PC-9 (cell line): ENCODE measurements at regions of chr5 and their contacts with region 1.

Region 1: GRCh38 chr5:119287547-119288073 is 68.2 kb upstream of the TNFAIP8 start:
- DNase-seq: peak; percentile 32 to 91
- H3K4me3 ChIP-seq: peak overlapping the region; percentile 43; the same call in 1 of the 2 replicates
- H3K27ac ChIP-seq: peak overlapping the region; percentile 75
- H3K4me1 ChIP-seq: peaks cover 50% of the 10 kb centered on the region
- H3K27me3 ChIP-seq: no peaks in the 10 kb centered on the region
- CTCF ChIP-seq: no peak

Region 2: GRCh38 chr5:119274767-119275130 is 12.9 kb before region 1 on chr5:
- CTCF ChIA-PET with region 1: no interaction called
- POLR2A ChIA-PET with region 1: interaction called, 6 read pairs
- intact Hi-C with region 1: loop called (anchors 1 kb)
- DNase-seq: no peak
- H3K4me3 ChIP-seq: no peak overlapping the region
- H3K27ac ChIP-seq: peak overlapping the region; percentile 92
- H3K4me1 ChIP-seq: peaks cover 49% of the 10 kb centered on the region
- H3K27me3 ChIP-seq: no peaks in the 10 kb centered on the region
- CTCF ChIP-seq: no peak